CD8-positive, alpha-beta T cell (primary cell): ENCODE measurements at regions of chr16 and their contacts with region 1.

Region 1: DNA sequence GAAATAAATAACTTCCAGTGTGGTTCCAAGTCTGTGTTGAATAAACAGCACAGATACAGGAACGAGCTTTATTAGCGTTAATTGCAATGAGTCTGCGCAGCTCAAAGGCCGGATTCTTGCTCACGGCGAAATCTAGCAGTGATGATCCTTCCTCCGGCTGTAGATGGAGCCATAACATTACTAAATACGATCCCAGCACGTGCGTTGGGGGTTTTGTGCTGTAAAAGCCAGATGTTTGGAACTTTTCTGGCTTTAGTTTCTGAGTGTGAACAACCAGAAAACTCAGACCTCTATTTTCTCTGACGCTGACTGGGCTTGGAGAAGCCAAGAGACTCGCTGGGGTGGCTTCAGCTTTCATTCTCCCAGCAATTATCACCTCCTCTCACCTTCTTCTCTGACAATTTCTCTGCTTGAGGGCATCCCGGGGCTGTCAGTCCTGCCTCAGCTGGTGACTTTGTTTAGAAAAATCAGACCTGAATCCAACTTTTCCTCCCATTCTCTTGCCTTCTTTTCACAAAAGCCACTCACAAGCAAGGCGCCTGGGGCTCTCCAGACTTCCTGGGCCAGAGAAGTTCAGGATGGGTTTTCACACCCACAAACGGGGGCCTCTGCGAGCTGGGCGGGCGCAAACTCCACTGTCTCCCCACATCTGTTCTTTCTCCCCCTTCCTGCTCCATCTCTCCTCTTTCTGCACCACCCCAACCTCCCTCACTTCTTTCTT is 47.1 kb upstream of the AKTIP start:
- DNase-seq: peak; percentile 13 to 82 (median 52)
- ATAC-seq: peak; percentile 73
- H3K4me3 ChIP-seq: no peak overlapping the region
- H3K4me3 Mint-ChIP-seq: no peak overlapping the region
- H3K27ac ChIP-seq: no peak overlapping the region
- H3K27ac Mint-ChIP-seq: no peak overlapping the region
- H3K4me1 ChIP-seq: peaks cover 9% of the 10 kb centered on the region
- H3K4me1 Mint-ChIP-seq: peaks cover 22% of the 10 kb centered on the region
- H3K27me3 ChIP-seq: no peaks in the 10 kb centered on the region
- H3K27me3 Mint-ChIP-seq: peaks cover 26% of the 10 kb centered on the region
- CTCF ChIP-seq: peak; percentile 93

Region 2: DNA sequence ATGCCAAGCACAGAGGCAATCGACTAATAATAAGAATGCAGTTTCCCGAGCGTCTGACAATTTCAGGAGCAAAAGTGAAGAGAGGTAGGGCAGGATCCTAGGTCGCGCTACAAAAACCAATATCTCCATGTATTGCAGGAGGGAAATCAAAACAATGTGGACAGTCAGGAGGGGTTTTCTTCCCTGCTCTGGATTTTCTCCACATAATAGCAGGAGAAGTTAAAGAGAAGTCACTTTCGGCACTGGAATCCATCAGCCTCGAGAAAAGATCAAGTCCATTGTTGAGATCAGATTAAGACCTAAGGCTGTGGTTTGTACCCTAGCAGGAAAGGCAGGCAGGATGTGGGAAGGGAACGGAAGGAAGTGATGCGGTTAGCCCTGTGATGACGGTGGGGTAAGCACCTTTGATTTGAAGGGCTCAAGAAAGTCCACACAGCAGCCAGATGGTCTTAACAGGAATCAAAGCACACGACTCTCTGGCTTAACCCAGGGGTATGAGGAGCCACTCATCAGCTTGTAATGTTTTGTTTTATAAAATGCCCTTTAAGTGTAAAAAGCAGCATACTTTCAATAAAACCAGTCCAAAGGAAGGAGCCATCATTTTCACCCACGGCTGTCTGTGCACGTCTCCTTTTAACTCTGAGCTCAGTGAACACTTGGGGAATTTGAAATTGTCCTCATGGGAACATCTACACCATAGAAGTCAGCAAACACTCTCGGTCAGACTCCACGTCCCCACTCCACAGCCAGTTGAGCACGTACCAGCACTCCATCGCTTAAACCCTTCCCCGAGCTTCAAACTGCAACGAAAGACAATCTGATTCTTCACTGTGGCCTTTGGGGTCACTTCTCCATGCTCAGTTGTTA is 31.3 kb before region 1 on chr16:
- CTCF ChIA-PET with region 1: interaction called, 9 read pairs
- POLR2A ChIA-PET with region 1: interaction called, 5 read pairs
- intact Hi-C with region 1: loop called in 1 of 2 experiments (anchors 1 kb)
- DNase-seq: peak; percentile 45 to 93 (median 79)
- ATAC-seq: peak; percentile 78
- H3K4me3 ChIP-seq: peak overlapping the region; percentile 26 to 55
- H3K4me3 Mint-ChIP-seq: peak overlapping the region; percentile 80
- H3K27ac ChIP-seq: peak overlapping the region; percentile 1 to 91
- H3K27ac Mint-ChIP-seq: peak overlapping the region; percentile 91
- H3K4me1 ChIP-seq: peaks cover 42% of the 10 kb centered on the region
- H3K4me1 Mint-ChIP-seq: peaks cover 56% of the 10 kb centered on the region
- H3K27me3 ChIP-seq: no peaks in the 10 kb centered on the region
- H3K27me3 Mint-ChIP-seq: peaks cover 13% of the 10 kb centered on the region
- CTCF ChIP-seq: no peak

Region 3: DNA sequence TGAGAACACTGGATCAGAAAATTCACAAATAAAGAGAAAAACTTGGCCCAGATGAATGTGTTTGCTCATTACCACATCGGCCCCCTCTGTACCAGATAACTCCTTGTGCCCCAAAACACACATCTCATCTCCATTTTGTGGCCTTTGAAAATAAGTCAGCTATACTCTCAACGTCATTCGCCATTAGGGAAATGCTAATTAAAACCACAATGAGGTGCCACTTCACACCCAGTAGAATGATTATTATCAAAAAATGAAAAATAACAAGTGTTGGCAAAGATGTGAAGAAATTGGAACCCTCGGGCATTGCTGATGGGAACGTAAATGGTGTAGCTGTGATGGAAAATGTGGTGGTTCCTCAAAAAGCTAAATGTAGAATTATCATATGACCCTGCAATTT is 12.5 kb before region 1 on chr16:
- CTCF ChIA-PET with region 1: interaction called, 14 read pairs
- POLR2A ChIA-PET with region 1: interaction called, 4 read pairs
- intact Hi-C with region 1: no loop called
- DNase-seq: peak in 2 of 9 experiments; percentile 41 to 71
- ATAC-seq: peak; percentile 60
- H3K4me3 ChIP-seq: no peak overlapping the region
- H3K4me3 Mint-ChIP-seq: no peak overlapping the region
- H3K27ac ChIP-seq: peak overlapping the region in 1 of 2 experiments; percentile 45
- H3K27ac Mint-ChIP-seq: no peak overlapping the region
- H3K4me1 ChIP-seq: no peaks in the 10 kb centered on the region
- H3K4me1 Mint-ChIP-seq: peaks cover 19% of the 10 kb centered on the region
- H3K27me3 ChIP-seq: peaks cover 0 to 7% of the 10 kb centered on the region in 2 experiments
- H3K27me3 Mint-ChIP-seq: peaks cover 12% of the 10 kb centered on the region
- CTCF ChIP-seq: no peak

Region 4: DNA sequence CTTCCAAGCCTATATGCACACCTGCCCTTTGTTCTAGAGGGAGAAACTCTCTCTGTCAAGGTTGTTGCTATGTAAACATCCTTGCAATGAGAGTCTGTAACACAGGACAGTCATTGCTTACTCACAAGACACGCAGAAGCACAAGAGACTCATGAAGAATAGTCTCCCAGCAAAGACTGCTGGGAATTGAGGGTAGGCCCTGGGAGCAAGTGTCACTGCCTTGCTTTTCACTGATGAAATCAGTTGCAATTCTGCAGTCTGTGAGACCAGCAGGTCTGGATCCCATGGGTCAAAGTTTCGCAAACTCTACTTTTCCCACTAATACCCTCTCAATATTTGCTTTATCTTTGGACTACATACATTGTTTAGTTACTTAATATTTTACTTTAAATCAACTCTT is 331.2 kb after region 1 on chr16:
- CTCF ChIA-PET with region 1: no interaction called
- POLR2A ChIA-PET with region 1: no interaction called
- intact Hi-C with region 1: loop called in 1 of 2 experiments (anchors 10 kb)
- DNase-seq: no peak
- ATAC-seq: no peak
- H3K4me3 ChIP-seq: no peak overlapping the region
- H3K4me3 Mint-ChIP-seq: no peak overlapping the region
- H3K27ac ChIP-seq: no peak overlapping the region
- H3K27ac Mint-ChIP-seq: no peak overlapping the region
- H3K4me1 ChIP-seq: no peaks in the 10 kb centered on the region
- H3K4me1 Mint-ChIP-seq: no peaks in the 10 kb centered on the region
- H3K27me3 ChIP-seq: no peaks in the 10 kb centered on the region
- H3K27me3 Mint-ChIP-seq: no peaks in the 10 kb centered on the region
- CTCF ChIP-seq: no peak

Region 5: GRCh38 chr16:55257966-55258613 is 1708.0 kb after region 1 on chr16:
- CTCF ChIA-PET with region 1: no interaction called
- POLR2A ChIA-PET with region 1: no interaction called
- intact Hi-C with region 1: loop called in 1 of 2 experiments (anchors 2 kb)
- DNase-seq: peak in 5 of 9 experiments; percentile 2 to 41 (median 26)
- ATAC-seq: no peak
- H3K4me3 ChIP-seq: no peak overlapping the region
- H3K4me3 Mint-ChIP-seq: no peak overlapping the region
- H3K27ac ChIP-seq: no peak overlapping the region
- H3K27ac Mint-ChIP-seq: no peak overlapping the region
- H3K4me1 ChIP-seq: no peaks in the 10 kb centered on the region
- H3K4me1 Mint-ChIP-seq: no peaks in the 10 kb centered on the region
- H3K27me3 ChIP-seq: no peaks in the 10 kb centered on the region
- H3K27me3 Mint-ChIP-seq: peaks cover 6% of the 10 kb centered on the region
- CTCF ChIP-seq: no peak